AG04450 (cell line): ENCODE measurements at regions of chr15 and their contacts with region 1.

Region 1: GRCh38 chr15:90886041-90886614 is 1.8 kb downstream of the FES start:
- DNase-seq: peak; percentile 24
- H3K4me3 ChIP-seq: no peak overlapping the region
- H3K27ac ChIP-seq: no peak overlapping the region
- H3K27me3 ChIP-seq: no peaks in the 10 kb centered on the region
- CTCF ChIP-seq: peak; percentile 99

Region 2: GRCh38 chr15:90620379-90621067 is 265.6 kb before region 1 on chr15:
- CTCF ChIA-PET with region 1: interaction called, 13 read pairs
- POLR2A ChIA-PET with region 1: no interaction called
- DNase-seq: no peak
- H3K4me3 ChIP-seq: no peak overlapping the region
- H3K27ac ChIP-seq: no peak overlapping the region
- H3K27me3 ChIP-seq: no peaks in the 10 kb centered on the region
- CTCF ChIP-seq: no peak

Region 3: GRCh38 chr15:90648137-90649070 is 237.7 kb before region 1 on chr15:
- CTCF ChIA-PET with region 1: interaction called, 139 read pairs
- POLR2A ChIA-PET with region 1: interaction called, 6 read pairs
- DNase-seq: peak; percentile 42
- H3K4me3 ChIP-seq: no peak overlapping the region
- H3K27ac ChIP-seq: peak overlapping the region; percentile 21
- H3K27me3 ChIP-seq: no peaks in the 10 kb centered on the region
- CTCF ChIP-seq: peak; percentile 88

Region 4: DNA sequence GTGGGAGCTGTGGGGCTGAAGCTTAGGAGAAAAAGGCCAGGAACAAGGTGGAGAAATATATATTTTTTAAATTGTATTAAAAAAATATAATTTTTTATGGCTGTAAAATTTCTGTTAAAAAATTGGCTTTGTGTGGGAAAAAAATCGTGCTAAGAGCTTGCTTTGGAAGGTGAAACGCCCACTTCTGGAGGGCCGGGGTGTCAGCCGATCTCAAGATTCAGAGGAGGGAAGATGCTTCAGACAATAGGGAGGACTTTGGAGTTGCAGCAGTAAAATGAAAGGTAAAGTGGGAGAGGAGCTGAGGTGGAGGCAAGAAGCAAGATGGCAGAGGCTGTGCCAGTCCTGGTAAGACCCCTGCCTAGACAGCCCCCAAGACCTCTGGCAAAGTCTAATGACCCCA is 214.9 kb before region 1 on chr15:
- CTCF ChIA-PET with region 1: interaction called, 12 read pairs
- POLR2A ChIA-PET with region 1: no interaction called
- DNase-seq: no peak
- H3K4me3 ChIP-seq: no peak overlapping the region
- H3K27ac ChIP-seq: no peak overlapping the region
- H3K27me3 ChIP-seq: no peaks in the 10 kb centered on the region
- CTCF ChIP-seq: no peak

Region 5: DNA sequence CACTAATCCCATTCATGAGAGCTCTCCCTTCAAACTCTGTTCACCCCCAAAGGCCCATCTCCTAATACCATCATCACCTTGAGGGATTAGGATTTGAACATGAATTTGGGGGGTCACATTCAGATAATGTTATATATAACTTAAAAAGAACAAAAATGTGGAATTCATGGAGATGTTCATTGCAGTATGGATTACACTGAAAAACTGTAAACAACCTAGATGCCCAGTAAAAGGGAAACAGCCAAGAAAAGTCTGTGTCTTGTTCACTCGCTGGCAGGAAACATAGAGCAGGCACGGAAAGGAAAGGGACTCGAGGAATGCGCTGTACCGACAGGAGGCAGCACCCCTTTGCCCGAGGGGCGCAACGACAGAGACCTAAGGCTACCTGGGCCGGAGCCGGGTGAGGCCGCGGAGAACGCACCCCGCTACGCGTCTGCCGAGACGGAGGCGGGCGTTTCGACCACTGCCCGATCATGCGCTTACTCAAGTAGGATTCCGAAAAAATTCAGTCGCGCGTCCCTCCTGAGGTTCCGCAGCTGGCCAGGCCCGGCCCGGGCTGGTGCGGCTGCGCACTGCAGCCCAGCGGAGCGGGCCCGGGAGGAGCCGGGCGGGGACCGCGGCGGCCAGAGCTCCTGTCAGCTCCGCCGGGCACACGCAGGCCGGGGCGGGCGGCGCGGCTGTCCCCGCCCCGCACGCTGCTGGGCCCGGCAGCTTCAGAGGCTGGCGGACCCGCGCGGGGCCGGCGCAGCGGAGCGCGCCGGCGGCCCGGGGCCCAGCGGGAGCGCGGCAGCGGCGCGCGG is 16.1 kb after region 1 on chr15:
- CTCF ChIA-PET with region 1: interaction called, 23 read pairs
- POLR2A ChIA-PET with region 1: interaction called, 3 read pairs
- DNase-seq: no peak
- H3K4me3 ChIP-seq: peak overlapping the region; percentile 77
- H3K27ac ChIP-seq: peak overlapping the region; percentile 81
- H3K27me3 ChIP-seq: no peaks in the 10 kb centered on the region
- CTCF ChIP-seq: peak; percentile 82

Region 6: GRCh38 chr15:91022075-91022835 is 136.1 kb after region 1 on chr15 and contains the start of gene VPS33B:
- CTCF ChIA-PET with region 1: no interaction called
- POLR2A ChIA-PET with region 1: no interaction called
- DNase-seq: peak; percentile 36
- H3K4me3 ChIP-seq: peak within 1 kb of the TSS; percentile 99
- H3K27ac ChIP-seq: peak within 1 kb of the TSS; percentile 21
- H3K27me3 ChIP-seq: no peaks in the 10 kb centered on the region
- CTCF ChIP-seq: no peak
- polyA plus RNA-seq, gene VPS33B: 12.3 and 12.9 TPM in 2 replicates

Region 7: DNA sequence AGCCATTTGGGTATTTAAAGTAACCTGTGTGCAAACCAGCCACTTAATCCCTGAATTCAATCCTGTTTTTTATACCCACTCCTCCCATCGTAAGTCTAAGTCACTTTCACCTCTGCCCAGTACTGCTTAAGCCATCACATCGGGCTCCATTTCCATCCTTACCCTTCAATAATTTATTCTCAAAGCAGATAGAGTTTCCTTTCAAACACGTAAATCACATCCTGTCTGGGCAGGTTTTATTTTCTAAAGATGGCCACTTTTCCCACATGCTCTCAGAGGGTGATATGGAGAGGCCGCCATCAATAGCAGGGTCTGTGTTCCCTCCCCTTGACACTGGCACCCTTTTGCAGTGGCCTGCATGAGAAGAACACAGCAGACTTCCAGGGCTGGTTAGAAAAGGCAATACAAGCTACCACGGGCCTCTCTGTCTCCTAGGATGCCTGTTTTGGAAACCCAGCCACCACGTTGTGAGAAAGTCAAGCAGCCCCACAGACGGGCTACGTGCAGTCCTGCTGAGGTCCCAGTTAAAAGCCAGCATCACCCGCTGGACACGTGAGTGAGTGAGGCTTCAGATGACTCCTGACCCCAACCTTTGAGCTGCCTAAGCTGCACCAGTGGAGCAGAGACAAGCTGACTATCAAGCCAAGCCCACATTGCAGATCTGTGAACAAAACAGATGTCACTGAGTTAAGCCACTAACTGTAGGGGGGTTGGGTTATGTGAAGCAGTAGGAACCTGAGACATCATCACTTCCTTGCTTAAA is 725.6 kb after region 1 on chr15:
- CTCF ChIA-PET with region 1: no interaction called
- POLR2A ChIA-PET with region 1: no interaction called
- DNase-seq: no peak
- H3K4me3 ChIP-seq: no peak overlapping the region
- H3K27ac ChIP-seq: no peak overlapping the region
- H3K27me3 ChIP-seq: peaks cover 3% of the 10 kb centered on the region
- CTCF ChIP-seq: no peak